Endothelial cell of umbilical vein (primary cell): ENCODE measurements at regions of chr4 and their contacts with region 1.

Region 1: DNA sequence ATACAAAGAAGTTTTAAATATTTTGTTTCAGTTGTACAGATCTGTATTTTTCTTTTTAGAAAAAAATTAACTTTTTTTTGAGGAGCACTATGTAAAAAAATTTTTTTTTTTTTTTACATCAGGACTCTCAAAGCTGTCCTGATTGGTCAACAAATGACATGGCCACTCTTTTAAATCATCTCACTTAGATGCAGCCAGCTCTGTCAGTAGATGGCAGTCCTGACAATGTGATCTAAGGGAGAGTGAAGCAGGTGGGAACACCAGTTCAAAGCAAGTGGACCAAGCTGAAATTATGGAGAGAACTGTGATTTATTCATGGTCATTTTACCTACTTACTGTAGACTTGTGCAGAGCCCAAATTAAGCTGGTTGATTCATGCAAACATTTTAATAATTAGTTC is 174.6 kb upstream of the GPRIN3 start:
- DNase-seq: peak; percentile 88
- H3K4me3 ChIP-seq: no peak overlapping the region
- H3K27ac ChIP-seq: no peak overlapping the region
- H3K4me1 ChIP-seq: peaks cover 12% of the 10 kb centered on the region
- H3K27me3 ChIP-seq: no peaks in the 10 kb centered on the region
- CTCF ChIP-seq: peak; percentile 39 to 41
- POLR2A ChIP-seq: no peak

Region 2: GRCh38 chr4:89166971-89167475 is 315.2 kb before region 1 on chr4:
- CTCF ChIA-PET with region 1: no interaction called
- POLR2A ChIA-PET with region 1: no interaction called
- dilution Hi-C with region 1: no loop called
- intact Hi-C with region 1: no loop called
- DNase-seq: peak; percentile 77
- H3K4me3 ChIP-seq: no peak overlapping the region
- H3K27ac ChIP-seq: no peak overlapping the region
- H3K4me1 ChIP-seq: no peaks in the 10 kb centered on the region
- H3K27me3 ChIP-seq: no peaks in the 10 kb centered on the region
- CTCF ChIP-seq: no peak
- POLR2A ChIP-seq: no peak

Region 3: DNA sequence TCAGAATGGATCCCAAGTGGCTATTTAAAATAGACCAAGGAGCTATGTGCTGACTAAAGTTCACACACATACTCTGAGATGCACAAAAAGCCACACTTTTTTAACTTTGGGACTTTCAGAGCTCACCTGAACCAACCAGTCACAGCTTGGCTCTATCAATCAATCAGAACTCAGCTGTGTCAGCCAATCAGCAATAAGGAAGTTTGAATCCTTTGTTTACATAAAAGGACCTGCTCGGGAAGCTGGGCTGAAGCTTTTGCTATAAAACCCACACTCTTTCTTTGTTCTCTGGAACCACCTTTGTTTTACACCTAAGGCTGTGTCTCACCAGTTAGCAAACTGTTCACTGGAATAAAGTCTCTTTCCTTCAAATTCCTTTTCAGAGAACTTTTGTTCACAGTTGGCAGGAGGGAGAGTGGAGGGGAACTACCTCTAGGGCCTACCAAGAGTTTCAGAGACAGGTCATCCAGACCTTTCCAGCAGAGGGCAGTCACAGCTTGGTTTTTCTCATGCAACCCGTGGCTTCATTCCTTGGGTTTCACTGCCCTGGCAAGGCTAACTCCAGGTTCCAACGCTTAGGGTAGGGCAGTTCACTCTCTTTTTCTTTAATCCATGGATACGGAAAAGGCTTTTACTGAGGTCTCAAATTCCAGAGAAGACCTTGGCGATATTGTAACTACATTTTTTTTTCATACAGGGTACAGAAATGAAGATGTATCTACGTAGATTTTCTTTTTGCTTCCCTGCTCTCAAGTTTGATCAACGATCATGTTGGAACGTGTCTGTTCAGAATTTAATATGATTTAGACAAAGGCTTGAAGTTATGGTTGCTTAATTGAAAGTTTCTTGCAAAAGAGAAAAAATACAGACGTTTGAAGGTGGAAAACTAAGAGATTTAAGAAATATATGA is 255.3 kb before region 1 on chr4:
- CTCF ChIA-PET with region 1: interaction called, 24 read pairs
- POLR2A ChIA-PET with region 1: no interaction called
- dilution Hi-C with region 1: no loop called
- intact Hi-C with region 1: loop called (anchors 2 kb)
- DNase-seq: peak; percentile 79
- H3K4me3 ChIP-seq: no peak overlapping the region
- H3K27ac ChIP-seq: no peak overlapping the region
- H3K4me1 ChIP-seq: peaks cover 2% of the 10 kb centered on the region
- H3K27me3 ChIP-seq: no peaks in the 10 kb centered on the region
- CTCF ChIP-seq: peak; percentile 70 to 75
- POLR2A ChIP-seq: no peak

Region 4: DNA sequence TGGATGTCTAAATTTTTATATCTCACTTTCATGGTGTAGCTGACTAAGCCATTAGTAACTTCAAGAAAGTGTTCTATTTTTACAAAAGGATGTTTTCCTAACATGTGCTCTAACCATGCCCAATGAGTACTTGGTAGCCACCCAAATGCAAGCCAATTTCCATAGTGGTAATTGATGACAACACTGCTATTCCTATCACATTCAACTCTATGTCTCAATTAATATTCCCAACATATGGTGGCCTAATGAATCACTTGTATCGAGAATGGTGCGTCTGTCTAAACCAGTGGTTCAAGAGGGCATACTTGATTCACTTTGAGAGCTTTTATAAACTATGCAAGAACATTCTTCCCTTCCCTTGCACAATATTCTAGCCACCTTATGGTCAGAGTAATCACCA is 61.7 kb before region 1 on chr4:
- CTCF ChIA-PET with region 1: no interaction called
- POLR2A ChIA-PET with region 1: no interaction called
- dilution Hi-C with region 1: no loop called
- intact Hi-C with region 1: no loop called
- DNase-seq: no peak
- H3K4me3 ChIP-seq: no peak overlapping the region
- H3K27ac ChIP-seq: no peak overlapping the region
- H3K4me1 ChIP-seq: no peaks in the 10 kb centered on the region
- H3K27me3 ChIP-seq: peaks cover 0 to 3% of the 10 kb centered on the region in 2 experiments
- CTCF ChIP-seq: no peak
- POLR2A ChIP-seq: no peak

Region 5: GRCh38 chr4:89549907-89550306 is 67.7 kb after region 1 on chr4:
- CTCF ChIA-PET with region 1: interaction called, 37 read pairs
- POLR2A ChIA-PET with region 1: no interaction called
- dilution Hi-C with region 1: no loop called
- intact Hi-C with region 1: no loop called
- DNase-seq: peak; percentile 97
- H3K4me3 ChIP-seq: no peak overlapping the region
- H3K27ac ChIP-seq: peak overlapping the region; percentile 81
- H3K4me1 ChIP-seq: peaks cover 23% of the 10 kb centered on the region
- H3K27me3 ChIP-seq: no peaks in the 10 kb centered on the region
- CTCF ChIP-seq: no peak
- POLR2A ChIP-seq: no peak

Region 6: GRCh38 chr4:89640620-89641366 is 158.5 kb after region 1 on chr4:
- CTCF ChIA-PET with region 1: interaction called, 33 read pairs
- POLR2A ChIA-PET with region 1: no interaction called
- dilution Hi-C with region 1: no loop called
- intact Hi-C with region 1: no loop called
- DNase-seq: no peak
- H3K4me3 ChIP-seq: no peak overlapping the region
- H3K27ac ChIP-seq: no peak overlapping the region
- H3K4me1 ChIP-seq: no peaks in the 10 kb centered on the region
- H3K27me3 ChIP-seq: no peaks in the 10 kb centered on the region
- CTCF ChIP-seq: peak; percentile 56 to 68
- POLR2A ChIP-seq: no peak

Region 7: GRCh38 chr4:89724716-89725115 is 242.5 kb after region 1 on chr4:
- CTCF ChIA-PET with region 1: interaction called, 3 read pairs
- POLR2A ChIA-PET with region 1: no interaction called
- dilution Hi-C with region 1: no loop called
- intact Hi-C with region 1: loop called (anchors 5 kb)
- DNase-seq: peak; percentile 66
- H3K4me3 ChIP-seq: no peak overlapping the region
- H3K27ac ChIP-seq: peak overlapping the region; percentile 73
- H3K4me1 ChIP-seq: peaks cover 28% of the 10 kb centered on the region
- H3K27me3 ChIP-seq: no peaks in the 10 kb centered on the region
- CTCF ChIP-seq: no peak
- POLR2A ChIP-seq: no peak

Region 8: DNA sequence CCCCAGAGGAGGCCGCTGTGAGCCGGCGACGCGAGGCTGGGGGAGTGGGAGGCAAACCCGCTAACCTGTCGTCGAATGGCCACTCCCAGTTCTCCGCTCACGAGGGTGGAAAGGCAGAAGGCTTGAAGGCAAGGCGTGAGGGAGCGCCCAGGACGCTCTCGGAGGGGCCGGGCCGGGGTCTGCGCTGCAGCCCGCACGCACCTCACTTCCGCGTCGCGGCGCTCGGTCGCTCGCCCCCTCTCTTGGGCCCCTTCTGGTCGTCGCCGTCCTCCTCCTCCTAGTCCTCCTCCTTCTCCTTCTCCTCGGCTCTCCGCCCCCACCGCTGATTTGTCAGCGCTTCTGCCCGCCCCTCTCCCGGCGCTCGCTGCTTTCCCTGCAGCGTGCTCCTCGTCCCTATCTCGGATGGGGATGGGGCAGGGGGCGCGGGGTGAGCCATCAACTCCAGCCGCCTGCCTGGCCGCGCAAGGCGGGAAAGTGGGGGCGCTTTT is 354.7 kb after region 1 on chr4 and contains the start of gene SNCA:
- CTCF ChIA-PET with region 1: interaction called, 13 read pairs
- POLR2A ChIA-PET with region 1: no interaction called
- dilution Hi-C with region 1: no loop called
- intact Hi-C with region 1: loop called (anchors 1 kb)
- DNase-seq: peak; percentile 89
- H3K4me3 ChIP-seq: peak within 1 kb of the TSS; percentile 56 to 93 (median 91)
- H3K27ac ChIP-seq: peak within 1 kb of the TSS; percentile 62
- H3K4me1 ChIP-seq: peaks cover 21% of the 10 kb centered on the region
- H3K27me3 ChIP-seq: no peaks in the 10 kb centered on the region
- CTCF ChIP-seq: no peak
- POLR2A ChIP-seq: peak; percentile 78
- total RNA-seq, gene SNCA: 116 and 124 TPM in 2 replicates

Region 9: GRCh38 chr4:90127223-90127705 is 645.0 kb after region 1 on chr4 and contains the start of gene CCSER1:
- CTCF ChIA-PET with region 1: no interaction called
- POLR2A ChIA-PET with region 1: no interaction called
- dilution Hi-C with region 1: no loop called
- intact Hi-C with region 1: loop called (anchors 10 kb)
- DNase-seq: peak; percentile 66
- H3K4me3 ChIP-seq: peak within 1 kb of the TSS; percentile 51 to 76 (median 63)
- H3K27ac ChIP-seq: no peak within 1 kb of the TSS
- H3K4me1 ChIP-seq: peaks cover 13% of the 10 kb centered on the region
- H3K27me3 ChIP-seq: peaks cover 2 to 4% of the 10 kb centered on the region in 2 experiments
- CTCF ChIP-seq: no peak
- POLR2A ChIP-seq: peak; percentile 67
- total RNA-seq, gene CCSER1: 0.92 and 1.8 TPM in 2 replicates